PC-9 (cell line): ENCODE measurements at regions of chr6 and their contacts with region 1.

Region 1: DNA sequence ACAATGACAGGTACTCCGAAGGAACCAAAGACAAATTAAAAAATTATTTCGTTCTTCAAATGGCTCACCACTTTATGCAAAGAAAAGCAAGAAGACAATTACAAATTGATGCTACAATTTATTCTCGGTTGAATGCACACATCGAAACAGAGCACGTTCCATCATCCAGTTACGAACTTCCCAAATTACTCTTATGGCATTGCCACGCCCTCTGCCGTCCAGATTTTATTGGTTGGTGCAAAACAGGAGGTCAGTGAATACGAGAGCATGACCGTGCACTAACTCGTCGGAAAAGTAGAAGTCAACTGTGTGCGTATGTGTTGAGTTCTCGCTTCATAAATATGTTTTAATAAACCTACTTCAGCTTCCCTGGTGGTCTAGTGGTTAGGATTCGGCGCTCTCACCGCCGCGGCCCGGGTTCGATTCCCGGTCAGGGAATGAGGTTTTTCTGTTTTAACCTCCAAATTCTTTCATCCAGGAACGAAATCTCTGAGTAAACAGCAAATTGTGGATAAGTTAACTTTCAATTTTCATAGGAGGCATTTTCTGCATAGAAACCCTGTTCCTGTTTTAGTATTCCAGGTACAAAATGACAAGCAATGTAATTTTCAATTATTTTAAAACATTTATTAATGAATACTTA is 23.2 kb downstream of the ZNF311 start:
- DNase-seq: peak; percentile 82 to 86
- H3K4me3 ChIP-seq: peak overlapping the region; percentile 76
- H3K27ac ChIP-seq: peak overlapping the region; percentile 81
- H3K4me1 ChIP-seq: peaks cover 55% of the 10 kb centered on the region
- H3K27me3 ChIP-seq: no peaks in the 10 kb centered on the region
- CTCF ChIP-seq: peak; percentile 2; the same call in 1 of the 2 replicates

Region 2: GRCh38 chr6:28863604-28864320 is 118.2 kb before region 1 on chr6:
- CTCF ChIA-PET with region 1: no interaction called
- POLR2A ChIA-PET with region 1: interaction called, 3 read pairs
- intact Hi-C with region 1: loop called (anchors 10 kb)
- DNase-seq: peak; percentile 77 to 85
- H3K4me3 ChIP-seq: peak overlapping the region; percentile 81
- H3K27ac ChIP-seq: peak overlapping the region; percentile 37
- H3K4me1 ChIP-seq: peaks cover 12% of the 10 kb centered on the region
- H3K27me3 ChIP-seq: no peaks in the 10 kb centered on the region
- CTCF ChIP-seq: peak; percentile 35; the same call in 1 of the 2 replicates

Region 3: GRCh38 chr6:28923318-28924102 is 58.4 kb before region 1 on chr6 and contains the start of gene TRIM27:
- CTCF ChIA-PET with region 1: interaction called, 4 read pairs
- POLR2A ChIA-PET with region 1: interaction called, 6 read pairs
- intact Hi-C with region 1: loop called (anchors 2 kb)
- DNase-seq: peak; percentile 83 to 94
- H3K4me3 ChIP-seq: peak within 1 kb of the TSS; percentile 91
- H3K27ac ChIP-seq: peak within 1 kb of the TSS; percentile 76
- H3K4me1 ChIP-seq: peaks cover 20% of the 10 kb centered on the region
- H3K27me3 ChIP-seq: no peaks in the 10 kb centered on the region
- CTCF ChIP-seq: no peak
- total RNA-seq, gene TRIM27: 67.2 and 86.2 TPM in 2 replicates

Region 4: GRCh38 chr6:28953039-28953584 is 28.8 kb before region 1 on chr6:
- CTCF ChIA-PET with region 1: interaction called, 10 read pairs
- POLR2A ChIA-PET with region 1: interaction called, 24 read pairs
- intact Hi-C with region 1: loop called (anchors 1 kb)
- DNase-seq: peak; percentile 61 to 67
- H3K4me3 ChIP-seq: peak overlapping the region; percentile 66
- H3K27ac ChIP-seq: peak overlapping the region; percentile 41
- H3K4me1 ChIP-seq: peaks cover 34% of the 10 kb centered on the region
- H3K27me3 ChIP-seq: no peaks in the 10 kb centered on the region
- CTCF ChIP-seq: no peak

Region 5: GRCh38 chr6:29005183-29005885 is 23.4 kb after region 1 on chr6 and contains the start of gene ZNF311:
- CTCF ChIA-PET with region 1: interaction called, 8 read pairs
- POLR2A ChIA-PET with region 1: no interaction called
- intact Hi-C with region 1: loop called (anchors 2 kb)
- DNase-seq: peak in 1 of 2 experiments; percentile 23
- H3K4me3 ChIP-seq: peak within 1 kb of the TSS; percentile 50
- H3K27ac ChIP-seq: no peak within 1 kb of the TSS
- H3K4me1 ChIP-seq: no peaks in the 10 kb centered on the region
- H3K27me3 ChIP-seq: no peaks in the 10 kb centered on the region
- CTCF ChIP-seq: no peak
- total RNA-seq, gene ZNF311: 2.1 TPM in 2 replicates